ENCODE measurements at regions of chr17 and their contacts with region 1.

Region 1: GRCh38 chr17:57861000-57861789 is 11.4 kb upstream of the MRPS23 start:
- DNase-seq: peak; percentile 41
- H3K4me3 ChIP-seq: peak overlapping the region; percentile 31
- H3K27ac ChIP-seq: peak overlapping the region; percentile 22
- H3K4me1 ChIP-seq: peaks cover 20% of the 10 kb centered on the region
- H3K27me3 ChIP-seq: no peaks in the 10 kb centered on the region
- CTCF ChIP-seq: no peak

Region 2: DNA sequence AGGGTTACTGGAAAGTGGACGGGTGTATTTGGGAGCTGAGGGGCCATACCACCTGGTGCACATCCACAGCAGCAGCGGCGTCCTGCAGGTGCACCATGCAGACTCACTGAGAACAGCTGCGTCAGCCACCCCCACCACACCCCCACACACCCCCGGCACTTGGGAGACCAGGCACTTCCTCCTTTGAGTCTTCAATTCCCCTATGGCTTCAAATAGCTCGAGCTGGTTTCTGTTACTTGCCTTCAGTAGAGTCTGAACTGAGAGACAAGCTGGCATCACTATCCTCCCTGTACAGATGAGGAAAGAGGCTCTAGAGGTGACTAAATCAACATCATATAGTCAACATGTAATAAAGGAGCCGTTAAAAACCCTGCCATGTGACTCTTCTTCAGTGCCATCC is 78.6 kb after region 1 on chr17:
- CTCF ChIA-PET with region 1: no interaction called
- POLR2A ChIA-PET with region 1: no interaction called
- intact Hi-C with region 1: no loop called
- DNase-seq: no peak
- H3K4me3 ChIP-seq: no peak overlapping the region
- H3K27ac ChIP-seq: peak overlapping the region; percentile 37
- H3K4me1 ChIP-seq: peaks cover 66% of the 10 kb centered on the region
- H3K27me3 ChIP-seq: no peaks in the 10 kb centered on the region
- CTCF ChIP-seq: no peak

Region 3: GRCh38 chr17:57987580-57988421 is 126.6 kb after region 1 on chr17 and contains the start of gene VEZF1:
- CTCF ChIA-PET with region 1: interaction called, 4 read pairs
- POLR2A ChIA-PET with region 1: no interaction called
- intact Hi-C with region 1: loop called (anchors 1 kb)
- DNase-seq: peak; percentile 88
- H3K4me3 ChIP-seq: peak within 1 kb of the TSS; percentile 87
- H3K27ac ChIP-seq: peak within 1 kb of the TSS; percentile 93
- H3K4me1 ChIP-seq: peaks cover 47% of the 10 kb centered on the region
- H3K27me3 ChIP-seq: no peaks in the 10 kb centered on the region
- CTCF ChIP-seq: no peak
- total RNA-seq, gene VEZF1: 75.7 and 77.7 TPM in 2 replicates

Region 4: GRCh38 chr17:57995076-57995956 is 134.1 kb after region 1 on chr17:
- CTCF ChIA-PET with region 1: interaction called, 32 read pairs
- POLR2A ChIA-PET with region 1: no interaction called
- intact Hi-C with region 1: loop called (anchors 1 kb)
- DNase-seq: peak; percentile 88
- H3K4me3 ChIP-seq: no peak overlapping the region
- H3K27ac ChIP-seq: peak overlapping the region; percentile 7
- H3K4me1 ChIP-seq: peaks cover 15% of the 10 kb centered on the region
- H3K27me3 ChIP-seq: no peaks in the 10 kb centered on the region
- CTCF ChIP-seq: peak; percentile 62

Region 5: DNA sequence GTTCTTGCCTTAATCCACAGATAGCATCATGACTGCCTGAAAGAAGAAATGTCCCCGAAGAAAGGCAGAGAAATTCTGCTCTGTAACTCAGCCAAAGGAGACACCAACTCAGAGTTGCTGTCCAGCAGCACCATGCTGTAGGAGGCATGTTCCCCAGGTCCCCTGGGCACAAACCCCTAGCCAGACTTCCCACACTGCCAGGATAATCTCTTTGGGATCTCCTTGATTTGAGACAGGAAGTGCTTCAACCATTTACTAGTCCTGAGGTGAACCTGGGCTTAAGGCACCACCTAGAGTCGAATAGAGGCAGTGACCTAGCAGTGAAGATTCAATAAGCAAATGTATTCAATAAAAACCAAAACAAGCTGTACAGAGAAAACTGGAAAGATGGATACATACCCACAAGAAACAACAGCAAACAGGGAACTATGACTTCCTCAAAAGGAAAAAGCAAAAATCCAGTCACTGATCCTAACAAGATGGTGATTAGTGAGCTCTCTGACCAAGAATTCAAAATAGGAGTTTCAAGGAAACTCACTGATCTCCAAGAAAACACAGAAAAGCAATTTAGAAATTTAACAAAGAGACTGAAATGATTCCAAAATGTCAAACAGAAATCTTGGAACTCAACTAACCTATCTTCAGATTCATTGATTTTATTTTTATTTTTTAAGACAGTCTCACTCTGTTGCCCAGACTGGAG is 311.3 kb after region 1 on chr17:
- CTCF ChIA-PET with region 1: interaction called, 13 read pairs
- POLR2A ChIA-PET with region 1: no interaction called
- intact Hi-C with region 1: no loop called
- DNase-seq: peak; percentile 52
- H3K4me3 ChIP-seq: no peak overlapping the region
- H3K27ac ChIP-seq: no peak overlapping the region
- H3K4me1 ChIP-seq: no peaks in the 10 kb centered on the region
- H3K27me3 ChIP-seq: peaks cover 80% of the 10 kb centered on the region
- CTCF ChIP-seq: peak; percentile 52

Measured in A673 (cell line).